Spleen (tissue), 13 donors: ENCODE measurements at regions of chr20 and their contacts with region 1.

Region 1: GRCh38 chr20:62010551-62011402 is 54.9 kb downstream of the TAF4 start:
- DNase-seq: no peak
- H3K4me3 ChIP-seq: no peak overlapping the region
- H3K27ac ChIP-seq: no peak overlapping the region
- H3K4me1 ChIP-seq: peaks cover 0 to 15% (median 4%) of the 10 kb centered on the region in 6 donors
- H3K27me3 ChIP-seq: no peaks in the 10 kb centered on the region
- CTCF ChIP-seq: peak in 10 of 11 experiments; percentile 35 to 78 (median 70)
- POLR2A ChIP-seq: no peak

Region 2: DNA sequence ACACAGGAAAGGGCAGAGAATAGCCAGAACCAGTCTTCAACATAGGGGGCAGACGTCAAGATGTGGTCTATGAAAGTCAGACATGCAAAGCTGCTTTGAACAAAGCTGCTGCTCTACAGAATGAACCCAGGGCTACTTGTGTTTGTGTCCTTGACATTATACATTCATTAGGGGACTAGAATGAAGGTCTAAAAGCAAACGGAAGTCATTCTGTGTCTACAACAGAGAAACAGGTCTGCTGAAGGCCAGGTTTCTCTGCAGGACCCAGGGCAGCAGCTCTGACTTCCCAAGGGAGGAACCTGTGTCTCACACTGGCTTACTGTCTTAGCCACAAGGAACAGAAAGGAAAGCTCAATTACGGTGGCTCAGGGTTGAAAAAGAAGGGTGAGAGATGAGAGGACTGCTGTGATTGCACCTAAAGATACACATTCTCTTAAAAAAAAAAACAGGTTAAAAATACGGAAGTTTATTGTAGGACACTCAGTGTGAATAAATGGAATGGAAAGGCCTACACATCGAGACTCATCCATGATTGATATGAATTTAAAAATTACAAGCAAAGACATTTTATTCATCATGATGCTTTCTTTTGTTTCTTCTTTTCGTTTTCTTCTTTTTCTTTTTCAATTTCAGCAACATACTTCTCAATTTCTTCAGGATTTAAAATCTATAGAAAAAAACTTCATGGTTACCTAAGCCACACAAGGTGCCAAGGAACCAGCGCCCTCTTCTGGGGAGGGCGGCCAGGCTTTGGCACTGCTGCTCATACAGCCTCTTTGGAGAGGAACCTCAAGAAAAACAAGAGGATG is 125.7 kb after region 1 on chr20:
- intact Hi-C with region 1: loop called (anchors 5 kb)
- DNase-seq: peak; percentile 88
- H3K4me3 ChIP-seq: no peak overlapping the region
- H3K27ac ChIP-seq: peak overlapping the region in 4 of 8 donors; percentile 70 to 87 (median 82)
- H3K4me1 ChIP-seq: peaks cover 17 to 91% (median 61%) of the 10 kb centered on the region in 6 donors
- H3K27me3 ChIP-seq: no peaks in the 10 kb centered on the region
- CTCF ChIP-seq: peak; percentile 42 to 89 (median 73)
- POLR2A ChIP-seq: no peak

Region 3: DNA sequence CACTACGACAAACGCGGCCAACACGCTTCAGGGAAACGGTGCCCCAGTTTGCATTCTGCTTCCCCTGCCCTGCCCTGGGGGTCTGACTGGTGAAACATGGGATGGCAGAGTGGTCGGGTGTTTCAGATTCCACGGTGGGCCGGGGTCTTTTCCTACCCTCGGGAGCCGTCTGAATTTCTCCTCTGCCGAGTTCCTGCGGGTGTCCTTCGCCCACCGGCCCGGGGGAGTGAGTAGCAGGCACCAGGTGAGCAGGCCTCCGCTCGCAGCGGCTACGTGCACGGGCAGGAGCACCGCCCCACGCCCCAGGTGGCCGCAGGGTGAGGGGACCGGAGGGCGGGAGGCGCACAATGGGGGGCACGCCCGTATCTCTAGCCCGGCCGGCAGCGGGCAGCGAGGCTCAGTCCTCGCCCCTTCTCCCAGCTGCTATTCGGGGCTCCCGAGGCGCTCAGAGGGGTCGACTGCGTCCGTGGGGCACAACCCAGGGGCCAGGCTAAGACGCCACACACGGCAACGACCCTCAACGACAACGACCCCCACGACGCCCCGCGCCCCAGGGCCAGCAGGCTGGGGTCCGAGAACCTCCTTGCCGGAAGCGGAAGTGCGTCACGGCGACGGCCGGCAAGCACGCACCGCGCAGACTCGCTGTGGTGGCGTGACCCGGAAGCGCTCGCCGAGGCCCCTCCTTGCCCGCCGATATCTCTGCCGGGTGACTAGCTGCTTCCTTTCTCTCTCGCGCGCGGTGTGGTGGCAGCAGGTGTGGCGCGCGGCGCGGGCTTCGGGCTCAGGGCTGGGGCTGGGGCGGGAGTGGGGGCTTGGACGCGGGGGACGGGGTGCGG is 375.8 kb after region 1 on chr20 and contains the start of gene RPS21:
- intact Hi-C with region 1: loop called (anchors 10 kb)
- DNase-seq: peak; percentile 98
- H3K4me3 ChIP-seq: peak within 1 kb of the TSS; percentile 89 to 99 (median 95)
- H3K27ac ChIP-seq: peak within 1 kb of the TSS; percentile 82 to 99 (median 96)
- H3K4me1 ChIP-seq: peaks cover 31 to 69% (median 40%) of the 10 kb centered on the region in 6 donors
- H3K27me3 ChIP-seq: no peaks in the 10 kb centered on the region
- CTCF ChIP-seq: peak in 4 of 11 experiments; percentile 22 to 42 (median 38)
- POLR2A ChIP-seq: peak in 1 of 3 donors; percentile 45
- total RNA-seq, gene RPS21: 1,168 to 3,909 (median 1,666) TPM